GM18951 (cell line): ENCODE measurements at regions of chr16 and their contacts with region 1.

Region 1: DNA sequence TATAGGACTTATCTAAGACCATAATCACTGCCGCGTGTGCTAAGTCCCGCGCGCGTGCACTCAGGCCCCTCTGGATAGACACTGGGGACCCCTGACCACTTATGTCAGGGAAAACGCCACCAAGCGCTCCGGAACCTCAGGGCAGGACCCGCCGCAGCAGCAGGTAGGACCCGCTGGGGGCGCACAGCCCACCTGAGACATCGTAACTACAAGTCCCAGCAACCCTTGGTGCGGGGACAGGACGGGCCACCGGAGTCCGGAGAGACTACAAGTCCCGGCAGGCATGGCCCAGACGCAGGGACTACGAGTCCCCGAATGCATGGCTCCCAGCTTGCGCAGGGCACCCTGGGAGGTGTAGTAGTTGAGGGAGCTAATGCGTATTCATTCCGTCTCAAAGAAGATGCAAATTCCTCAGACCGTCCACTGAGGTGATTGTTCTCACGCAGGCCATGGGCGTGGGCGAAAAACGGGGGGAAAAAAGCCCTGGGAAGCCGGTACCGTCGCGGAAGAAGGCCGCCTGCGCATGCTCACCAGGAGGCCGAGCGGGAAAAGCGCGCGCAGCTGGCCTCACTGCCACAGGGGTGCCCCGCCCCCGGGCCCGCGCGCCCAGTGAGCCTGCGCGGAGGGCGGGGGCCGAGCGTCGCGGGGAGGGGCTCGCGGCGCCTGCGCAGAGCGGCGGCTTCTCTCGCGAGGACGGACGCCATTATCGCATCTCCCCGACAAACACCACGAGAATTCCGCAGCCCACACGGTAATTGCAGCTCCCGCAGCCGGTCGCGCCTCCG is at the start of gene BANP:
- POLR2A ChIP-seq: peak; percentile 49

Region 2: DNA sequence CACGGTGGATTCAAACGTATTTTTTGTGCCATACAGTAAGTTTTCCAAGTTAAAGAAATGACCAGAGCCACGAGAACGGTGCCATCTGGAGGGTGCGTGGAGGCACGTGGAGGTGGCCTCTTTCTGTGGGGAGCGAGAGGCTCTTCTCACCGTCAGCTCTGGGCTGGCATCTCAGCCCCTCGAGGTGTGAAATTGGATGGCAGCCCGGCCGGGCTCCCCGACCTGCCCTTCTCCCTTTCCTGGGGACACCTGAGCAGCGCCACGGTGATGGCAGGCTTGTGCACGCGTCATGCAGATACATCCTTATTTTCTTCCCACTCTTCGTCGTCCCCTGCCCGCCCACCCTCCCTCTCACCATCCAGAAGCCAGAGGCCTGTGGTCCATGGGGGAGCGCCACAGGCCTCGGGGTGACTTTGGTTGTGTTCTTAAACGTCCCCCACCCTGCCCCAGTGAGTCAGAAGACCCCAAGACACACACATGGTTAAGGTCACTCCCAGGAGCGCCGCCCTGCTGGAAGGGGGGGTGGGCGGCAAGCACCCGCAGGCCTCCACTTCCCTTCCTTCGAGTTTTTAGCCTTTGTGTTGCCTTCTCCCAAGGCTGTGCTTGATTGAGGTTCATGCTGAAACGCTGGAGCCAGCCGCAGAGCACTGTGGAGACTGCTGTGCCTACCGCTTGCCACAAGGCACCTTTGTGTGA is 109.7 kb after region 1 on chr16:
- in situ Hi-C with region 1: no loop called
- POLR2A ChIP-seq: no peak

Region 3: GRCh38 chr16:88533932-88534732 is 583.2 kb after region 1 on chr16:
- in situ Hi-C with region 1: loop called (anchors 25 kb)
- POLR2A ChIP-seq: peak; percentile 91